Heart right ventricle (tissue), 16 donors: ENCODE measurements at regions of chr1 and their contacts with region 1.

Region 1: GRCh38 chr1:237041795-237042525 is at the start of gene RYR2:
- DNase-seq: peak in 1 of 2 donors; percentile 57
- ATAC-seq: peak; percentile 48 to 78 (median 64)
- H3K4me3 ChIP-seq: peak within 1 kb of the TSS; percentile 59 to 78 (median 70)
- H3K27ac ChIP-seq: peak within 1 kb of the TSS; percentile 88 to 99 (median 96)
- H3K4me1 ChIP-seq: peaks cover 0 to 9% (median 0%) of the 10 kb centered on the region in 9 donors
- H3K27me3 ChIP-seq: peaks cover 0 to 63% (median 27%) of the 10 kb centered on the region in 7 donors
- CTCF ChIP-seq: peak; percentile 18 to 73 (median 58)
- total RNA-seq, gene RYR2: 505 to 1,252 (median 983) TPM

Region 2: GRCh38 chr1:236893626-236894545 is 148.1 kb before region 1 on chr1:
- intact Hi-C with region 1: loop called in 5 of 10 experiments (anchors 5 to 10 kb)
- DNase-seq: no peak
- ATAC-seq: no peak
- H3K4me3 ChIP-seq: no peak overlapping the region
- H3K27ac ChIP-seq: peak overlapping the region in 7 of 10 donors; percentile 48 to 92 (median 88)
- H3K4me1 ChIP-seq: peaks cover 4 to 77% (median 37%) of the 10 kb centered on the region in 9 donors
- H3K27me3 ChIP-seq: no peaks in the 10 kb centered on the region
- CTCF ChIP-seq: no peak

Region 3: DNA sequence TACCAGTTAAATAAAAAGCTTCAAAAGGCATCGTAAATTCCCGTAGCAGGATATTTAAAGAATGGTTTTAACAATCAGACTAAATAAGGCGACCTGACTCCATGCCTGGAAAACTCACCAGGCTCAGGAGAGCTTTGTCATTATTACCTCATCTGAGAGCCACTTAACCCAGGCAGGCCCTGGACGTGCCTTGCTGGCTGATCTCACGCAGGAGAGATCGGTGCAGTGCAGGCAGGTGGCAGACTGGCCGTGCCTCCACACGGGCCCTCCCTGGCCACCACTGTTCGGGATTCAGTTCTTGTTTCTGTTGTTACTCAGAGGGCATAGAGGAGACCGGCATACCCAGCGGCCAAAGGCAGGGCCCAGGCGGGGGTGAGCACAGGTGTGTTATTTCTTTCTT is 44.1 kb before region 1 on chr1:
- intact Hi-C with region 1: loop called in 5 of 10 experiments (anchors 2 to 10 kb)
- DNase-seq: peak; percentile 63 to 69
- ATAC-seq: peak; percentile 82 to 92 (median 90)
- H3K4me3 ChIP-seq: peak overlapping the region in 8 of 10 donors; percentile 9 to 42 (median 34)
- H3K27ac ChIP-seq: peak overlapping the region; percentile 80 to 97 (median 91)
- H3K4me1 ChIP-seq: peaks cover 0 to 22% (median 0%) of the 10 kb centered on the region in 9 donors
- H3K27me3 ChIP-seq: no peaks in the 10 kb centered on the region
- CTCF ChIP-seq: peak in 2 of 9 donors; percentile 29 to 33

Region 4: GRCh38 chr1:237012788-237013383 is 29.1 kb before region 1 on chr1:
- intact Hi-C with region 1: loop called in 1 of 10 experiments (anchors 1 kb)
- DNase-seq: peak; percentile 71 to 79
- ATAC-seq: peak; percentile 85 to 95 (median 93)
- H3K4me3 ChIP-seq: peak overlapping the region in 3 of 10 donors; percentile 11 to 28 (median 15)
- H3K27ac ChIP-seq: peak overlapping the region; percentile 76 to 95 (median 90)
- H3K4me1 ChIP-seq: peaks cover 4 to 44% (median 11%) of the 10 kb centered on the region in 9 donors
- H3K27me3 ChIP-seq: no peaks in the 10 kb centered on the region
- CTCF ChIP-seq: no peak

Region 5: GRCh38 chr1:237071641-237072420 is 29.9 kb after region 1 on chr1:
- intact Hi-C with region 1: no loop called
- DNase-seq: no peak
- ATAC-seq: peak; percentile 19 to 64 (median 30)
- H3K4me3 ChIP-seq: peak overlapping the region in 5 of 10 donors; percentile 2 to 26 (median 11)
- H3K27ac ChIP-seq: peak overlapping the region in 6 of 10 donors; percentile 20 to 57 (median 34)
- H3K4me1 ChIP-seq: peaks cover 0 to 81% (median 33%) of the 10 kb centered on the region in 9 donors
- H3K27me3 ChIP-seq: no peaks in the 10 kb centered on the region
- CTCF ChIP-seq: no peak

Region 6: GRCh38 chr1:237197470-237198425 is 155.8 kb after region 1 on chr1:
- intact Hi-C with region 1: loop called in 1 of 10 experiments (anchors 10 kb)
- DNase-seq: no peak
- ATAC-seq: peak in 3 of 8 donors; percentile 13 to 26 (median 25)
- H3K4me3 ChIP-seq: no peak overlapping the region
- H3K27ac ChIP-seq: peak overlapping the region in 2 of 10 donors; percentile 12 to 43
- H3K4me1 ChIP-seq: peaks cover 0 to 79% (median 19%) of the 10 kb centered on the region in 9 donors
- H3K27me3 ChIP-seq: no peaks in the 10 kb centered on the region
- CTCF ChIP-seq: no peak